Endothelial cell of umbilical vein (primary cell): ENCODE measurements at regions of chr10 and their contacts with region 1.

Region 1: GRCh38 chr10:116490028-116490662 is 55.6 kb upstream of the PNLIP start:
- DNase-seq: peak; percentile 10
- H3K4me3 ChIP-seq: no peak overlapping the region
- H3K27ac ChIP-seq: no peak overlapping the region
- H3K4me1 ChIP-seq: no peaks in the 10 kb centered on the region
- H3K27me3 ChIP-seq: no peaks in the 10 kb centered on the region
- CTCF ChIP-seq: peak; percentile 37
- POLR2A ChIP-seq: no peak

Region 2: DNA sequence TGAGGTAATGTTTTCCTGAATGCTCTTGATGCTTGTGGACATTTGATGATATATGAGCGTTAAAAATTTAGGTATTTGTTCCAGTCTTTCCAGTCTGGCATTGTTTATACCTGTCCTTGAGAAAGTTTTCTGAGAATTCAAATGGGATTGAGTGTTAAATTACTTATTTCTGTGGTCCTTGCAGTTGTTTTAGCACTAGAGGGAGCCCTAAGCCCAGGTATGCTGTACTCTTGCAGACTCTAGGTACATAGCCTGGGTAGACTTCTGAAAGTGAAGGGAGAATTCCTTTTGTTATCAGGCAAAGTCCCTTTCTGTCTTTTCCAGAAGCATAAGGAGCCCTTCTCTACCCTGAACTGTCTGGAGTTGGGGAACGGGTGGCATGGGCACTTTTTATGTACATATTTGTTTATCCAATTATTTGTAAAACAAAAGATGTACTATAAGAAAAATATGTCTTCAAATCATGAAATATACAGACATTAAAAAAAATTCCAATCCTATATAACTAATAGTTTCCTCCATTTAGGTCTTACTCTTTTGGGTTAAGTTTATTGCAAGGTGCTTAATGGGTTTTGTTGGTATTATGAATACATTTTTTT is 1134.9 kb before region 1 on chr10:
- CTCF ChIA-PET with region 1: no interaction called
- POLR2A ChIA-PET with region 1: no interaction called
- dilution Hi-C with region 1: no loop called
- intact Hi-C with region 1: loop called (anchors 1 kb)
- DNase-seq: peak; percentile 49
- H3K4me3 ChIP-seq: no peak overlapping the region
- H3K27ac ChIP-seq: no peak overlapping the region
- H3K4me1 ChIP-seq: no peaks in the 10 kb centered on the region
- H3K27me3 ChIP-seq: no peaks in the 10 kb centered on the region
- CTCF ChIP-seq: peak; percentile 43 to 63
- POLR2A ChIP-seq: no peak

Region 3: DNA sequence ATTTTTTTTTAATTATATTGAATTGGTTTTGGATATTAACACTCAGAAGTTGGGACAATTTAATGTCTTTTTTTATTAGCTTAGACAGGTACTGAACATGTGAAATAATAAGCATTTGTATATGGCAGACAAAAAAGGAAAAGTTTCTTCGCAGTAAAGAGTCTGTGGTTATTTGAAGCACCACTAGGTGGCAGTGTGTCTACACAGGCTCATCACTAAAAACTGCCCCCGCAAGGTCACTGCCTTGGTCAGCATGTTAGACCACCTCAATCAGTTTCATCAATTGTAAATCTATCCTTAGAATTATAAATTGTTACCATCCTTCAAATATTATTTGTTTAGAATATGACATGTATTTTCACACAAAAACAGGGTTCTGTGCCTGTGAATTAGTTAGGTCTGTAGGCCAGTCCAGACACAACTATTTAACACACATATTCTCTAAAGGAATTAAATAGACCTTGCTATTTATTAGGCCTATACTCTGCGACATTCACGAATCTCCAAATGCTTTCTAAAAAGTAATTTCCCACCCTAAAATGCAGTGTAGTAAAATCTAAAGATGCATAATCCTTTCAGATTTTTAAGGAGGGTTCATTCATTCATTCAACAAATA is 45.5 kb before region 1 on chr10:
- CTCF ChIA-PET with region 1: no interaction called
- POLR2A ChIA-PET with region 1: no interaction called
- dilution Hi-C with region 1: no loop called
- intact Hi-C with region 1: loop called (anchors 1 kb)
- DNase-seq: peak; percentile 21
- H3K4me3 ChIP-seq: no peak overlapping the region
- H3K27ac ChIP-seq: no peak overlapping the region
- H3K4me1 ChIP-seq: no peaks in the 10 kb centered on the region
- H3K27me3 ChIP-seq: no peaks in the 10 kb centered on the region
- CTCF ChIP-seq: peak; percentile 55 to 68
- POLR2A ChIP-seq: no peak